Activated CD4-positive, alpha-beta memory T cell treated with anti-CD3 and anti-CD28 coated beads, Interleukin-2, amount 10 ng/mL, durations not matched to agents 7 days and 5 days (primary cell): ENCODE measurements at regions of chr6 and their contacts with region 1.

Region 1: DNA sequence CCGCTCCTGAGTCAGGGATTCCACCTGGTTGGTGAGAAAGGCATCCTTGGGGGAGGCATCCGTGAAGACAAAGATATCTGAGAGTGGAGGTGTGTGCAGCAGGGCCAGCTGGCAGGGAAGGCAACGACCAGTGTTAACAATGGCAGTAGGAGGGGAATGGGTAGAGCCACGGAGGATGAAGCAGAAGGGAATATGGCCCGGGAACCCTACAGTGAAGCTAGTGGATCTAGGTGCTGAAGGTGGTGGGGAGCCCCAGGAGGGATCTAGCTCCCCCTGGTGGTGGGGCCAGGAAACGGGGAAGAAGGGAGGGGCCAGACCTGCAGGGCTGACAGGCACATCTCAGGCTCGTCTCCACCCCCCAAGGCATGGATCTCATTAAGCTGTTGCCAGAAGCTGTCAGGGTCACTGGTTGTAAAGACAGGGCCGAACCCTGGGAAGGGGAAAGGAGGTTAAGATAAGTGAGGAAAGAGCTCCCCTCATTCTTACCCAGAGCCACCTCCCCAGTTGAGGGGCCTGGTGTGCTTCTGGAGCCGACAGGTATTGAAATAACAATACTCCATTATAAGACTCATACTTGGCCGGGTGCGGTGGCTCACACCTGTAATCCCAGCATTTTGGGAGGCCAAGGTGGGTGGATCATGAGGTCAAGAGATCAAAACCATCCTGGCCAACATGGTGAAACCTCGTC is 7.3 kb downstream of the VWA7 start:
- DNase-seq: peak; percentile 86
- H3K4me3 Mint-ChIP-seq: no peak overlapping the region
- H3K27ac Mint-ChIP-seq: peak overlapping the region; percentile 57
- H3K4me1 Mint-ChIP-seq: peaks cover 37% of the 10 kb centered on the region
- H3K27me3 Mint-ChIP-seq: no peaks in the 10 kb centered on the region

Region 2: DNA sequence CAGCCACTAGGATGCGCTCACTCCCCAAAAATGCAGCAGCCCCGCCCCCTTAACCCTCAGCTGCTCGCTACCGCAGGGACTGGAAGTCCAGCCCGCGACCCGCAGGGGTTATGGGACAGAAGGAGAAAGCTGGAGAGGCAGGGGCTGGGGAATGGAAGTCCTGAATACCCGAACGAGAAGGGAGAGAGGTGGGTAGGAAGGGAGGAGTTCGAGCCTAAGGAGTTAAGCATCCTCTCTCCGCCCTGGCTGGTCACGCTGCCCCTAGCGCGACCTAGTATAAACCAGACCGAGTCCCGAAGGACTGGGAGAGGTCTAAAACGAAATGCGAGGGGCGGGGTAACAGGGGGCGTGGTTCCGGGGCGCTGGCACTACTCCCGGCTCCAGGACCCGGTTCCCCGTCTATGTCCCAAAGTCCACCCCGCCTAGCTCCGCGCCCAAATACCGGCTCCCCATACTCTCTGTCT is 40.3 kb before region 1 on chr6:
- CTCF ChIA-PET with region 1: interaction called, 31 read pairs
- POLR2A ChIA-PET with region 1: interaction called, 103 read pairs
- DNase-seq: peak; percentile 82
- H3K4me3 Mint-ChIP-seq: peak overlapping the region; percentile 88
- H3K27ac Mint-ChIP-seq: peak overlapping the region; percentile 82
- H3K4me1 Mint-ChIP-seq: peaks cover 79% of the 10 kb centered on the region
- H3K27me3 Mint-ChIP-seq: no peaks in the 10 kb centered on the region

Region 3: DNA sequence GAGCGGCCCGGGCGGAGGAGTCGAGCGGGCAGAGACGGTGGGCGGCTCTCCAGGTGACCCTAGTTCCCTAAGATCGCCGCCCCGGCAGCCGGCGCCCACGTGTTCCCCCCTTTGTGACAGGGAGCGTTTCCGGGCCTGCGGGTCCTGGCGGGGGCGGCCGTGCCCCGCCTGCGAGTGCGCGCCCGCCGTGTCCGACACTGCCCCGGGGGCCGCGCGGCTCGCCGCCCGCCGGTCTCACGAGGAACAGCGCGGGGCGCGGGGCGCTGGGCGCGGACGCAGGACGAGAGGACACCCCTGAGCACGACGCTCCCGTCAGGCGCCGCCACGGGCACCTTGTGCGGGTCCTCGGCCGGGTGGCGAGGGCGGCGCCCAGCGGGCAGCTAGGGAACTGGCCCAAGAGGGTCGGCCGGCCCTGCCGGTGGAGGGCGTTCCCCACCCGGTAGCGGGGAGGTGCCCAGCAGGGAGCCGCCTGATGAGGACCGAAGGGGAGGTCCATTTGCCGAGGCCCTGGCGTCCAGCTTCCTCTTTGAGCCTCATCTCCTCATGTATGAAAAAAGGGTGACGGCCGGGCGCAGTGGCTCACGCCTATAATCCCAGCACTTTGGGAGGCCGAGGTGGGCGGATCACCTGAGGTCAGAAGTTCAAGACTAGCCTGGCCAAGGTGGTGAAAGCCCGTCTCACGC is 25.9 kb after region 1 on chr6 and contains the start of gene VARS1:
- CTCF ChIA-PET with region 1: interaction called, 25 read pairs
- POLR2A ChIA-PET with region 1: interaction called, 11 read pairs
- DNase-seq: peak; percentile 86
- H3K4me3 Mint-ChIP-seq: peak within 1 kb of the TSS; percentile 89
- H3K27ac Mint-ChIP-seq: peak within 1 kb of the TSS; percentile 97
- H3K4me1 Mint-ChIP-seq: peaks cover 58% of the 10 kb centered on the region
- H3K27me3 Mint-ChIP-seq: no peaks in the 10 kb centered on the region
- total RNA-seq, gene VARS1: 84.1 to 88.4 TPM

Region 4: DNA sequence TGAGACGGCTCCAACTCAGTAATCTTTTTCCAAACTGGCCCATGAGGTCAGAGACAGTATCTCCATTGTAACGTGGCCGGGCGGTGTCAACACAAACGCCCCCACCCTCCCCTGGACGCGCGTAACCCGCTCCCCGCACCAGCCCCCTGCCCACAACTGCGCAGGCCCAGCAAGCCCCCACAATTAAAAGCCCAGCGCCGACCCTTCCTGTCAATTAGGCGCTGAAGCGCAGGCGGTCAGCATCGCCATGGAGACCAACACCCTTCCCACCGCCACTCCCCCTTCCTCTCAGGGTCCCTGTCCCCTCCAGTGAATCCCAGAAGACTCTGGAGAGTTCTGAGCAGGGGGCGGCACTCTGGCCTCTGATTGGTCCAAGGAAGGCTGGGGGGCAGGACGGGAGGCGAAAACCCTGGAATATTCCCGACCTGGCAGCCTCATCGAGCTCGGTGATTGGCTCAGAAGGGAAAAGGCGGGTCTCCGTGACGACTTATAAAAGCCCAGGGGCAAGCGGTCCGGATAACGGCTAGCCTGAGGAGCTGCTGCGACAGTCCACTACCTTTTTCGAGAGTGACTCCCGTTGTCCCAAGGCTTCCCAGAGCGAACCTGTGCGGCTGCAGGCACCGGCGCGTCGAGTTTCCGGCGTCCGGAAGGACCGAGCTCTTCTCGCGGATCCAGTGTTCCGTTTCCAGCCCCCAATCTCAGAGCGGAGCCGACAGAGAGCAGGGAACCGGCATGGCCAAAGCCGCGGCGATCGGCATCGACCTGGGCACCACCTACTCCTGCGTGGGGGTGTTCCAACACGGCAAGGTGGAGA is 45.4 kb after region 1 on chr6 and contains the starts of genes HSPA1A and HSPA1L:
- CTCF ChIA-PET with region 1: interaction called, 10 read pairs
- POLR2A ChIA-PET with region 1: interaction called, 3 read pairs
- DNase-seq: peak; percentile 82
- H3K4me3 Mint-ChIP-seq: peak within 1 kb of the TSS; percentile 83
- H3K27ac Mint-ChIP-seq: peak within 1 kb of the TSS; percentile 96
- H3K4me1 Mint-ChIP-seq: peaks cover 55% of the 10 kb centered on the region
- H3K27me3 Mint-ChIP-seq: no peaks in the 10 kb centered on the region
- total RNA-seq, gene HSPA1A: 147 to 151 TPM
- total RNA-seq, gene HSPA1L: 2.8 to 3.0 TPM